ENCODE measurements at regions of chr3 and their contacts with region 1.

Region 1: GRCh38 chr3:185176750-185177359 is 24.0 kb upstream of the C3orf70 start:
- DNase-seq: no peak
- H3K4me3 ChIP-seq: no peak overlapping the region
- CTCF ChIP-seq: peak; percentile 27

Region 2: DNA sequence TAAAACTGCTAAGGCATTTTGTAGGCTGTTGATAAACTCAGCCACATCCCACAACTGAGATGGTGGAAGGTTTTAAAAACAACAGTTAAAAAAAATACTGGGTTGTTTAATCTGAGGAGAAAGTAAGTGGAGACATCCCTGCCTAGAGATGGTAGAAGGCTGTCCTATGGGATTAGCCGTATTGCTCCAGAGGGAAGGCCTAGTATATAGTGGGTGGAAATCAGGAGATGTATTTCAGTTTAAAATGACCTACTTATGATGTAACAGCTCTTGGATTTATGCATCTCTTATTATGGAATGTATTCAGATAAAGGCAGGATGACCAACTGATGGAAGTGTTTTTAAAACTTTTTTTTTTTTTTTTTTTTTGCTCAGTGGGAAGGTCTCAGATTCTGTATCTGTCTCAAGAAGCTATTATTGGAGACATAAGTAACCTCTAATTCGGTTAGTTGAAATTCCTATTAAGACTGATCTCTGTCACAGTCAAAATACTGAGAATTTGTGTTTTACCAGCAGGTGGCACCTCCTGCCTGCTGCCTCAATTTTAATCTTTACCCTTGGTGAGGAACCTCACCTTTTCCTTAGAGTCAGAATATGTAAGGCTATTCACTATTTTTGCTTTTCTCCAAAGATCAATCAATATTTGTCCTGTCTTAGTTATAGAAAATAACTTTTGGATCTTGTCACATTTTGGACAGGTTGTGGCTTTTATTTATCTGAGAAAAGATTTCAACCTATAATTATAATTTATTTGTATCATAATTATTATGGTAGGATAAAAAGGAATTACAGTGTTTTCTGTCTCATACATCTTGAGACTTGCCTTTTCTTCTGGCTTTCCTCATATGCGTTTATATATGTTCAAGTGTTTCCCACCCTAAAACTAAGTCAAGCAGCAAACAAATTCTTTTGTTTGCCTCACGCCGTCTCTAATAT is 301.9 kb before region 1 on chr3:
- CTCF ChIA-PET with region 1: interaction called, 28 read pairs
- POLR2A ChIA-PET with region 1: no interaction called
- DNase-seq: no peak
- H3K4me3 ChIP-seq: no peak overlapping the region
- CTCF ChIP-seq: peak; percentile 30

Region 3: GRCh38 chr3:185084901-185085300 is 92.0 kb before region 1 on chr3:
- CTCF ChIA-PET with region 1: interaction called, 25 read pairs
- POLR2A ChIA-PET with region 1: no interaction called
- DNase-seq: peak; percentile 73
- H3K4me3 ChIP-seq: no peak overlapping the region
- CTCF ChIP-seq: peak; percentile 65

Region 4: DNA sequence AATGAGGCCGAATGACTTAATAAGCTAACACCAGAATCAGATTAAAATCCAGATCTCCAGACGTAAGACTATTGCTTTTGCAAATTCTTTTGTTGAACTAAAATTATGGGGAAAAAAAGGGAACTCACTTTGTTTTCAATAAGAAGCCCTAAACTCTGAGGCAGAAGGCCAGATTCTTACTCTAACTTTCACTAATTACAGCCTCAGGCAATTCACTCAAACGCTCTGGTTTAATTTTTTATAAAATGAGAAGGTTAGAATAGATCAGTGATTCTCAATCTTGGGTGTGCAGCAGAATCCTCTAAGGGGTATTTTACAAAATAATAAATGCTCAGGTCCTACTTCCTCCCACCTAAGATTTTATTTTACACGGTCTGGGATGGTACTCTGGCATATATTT is 62.1 kb before region 1 on chr3:
- CTCF ChIA-PET with region 1: no interaction called
- POLR2A ChIA-PET with region 1: no interaction called
- DNase-seq: no peak
- H3K4me3 ChIP-seq: no peak overlapping the region
- CTCF ChIP-seq: no peak

Region 5: GRCh38 chr3:185152410-185153210 is 24.2 kb before region 1 on chr3 and contains the start of gene C3orf70:
- CTCF ChIA-PET with region 1: interaction called, 14 read pairs
- POLR2A ChIA-PET with region 1: no interaction called
- DNase-seq: no peak
- H3K4me3 ChIP-seq: peak within 1 kb of the TSS; percentile 83
- CTCF ChIP-seq: no peak

Region 6: DNA sequence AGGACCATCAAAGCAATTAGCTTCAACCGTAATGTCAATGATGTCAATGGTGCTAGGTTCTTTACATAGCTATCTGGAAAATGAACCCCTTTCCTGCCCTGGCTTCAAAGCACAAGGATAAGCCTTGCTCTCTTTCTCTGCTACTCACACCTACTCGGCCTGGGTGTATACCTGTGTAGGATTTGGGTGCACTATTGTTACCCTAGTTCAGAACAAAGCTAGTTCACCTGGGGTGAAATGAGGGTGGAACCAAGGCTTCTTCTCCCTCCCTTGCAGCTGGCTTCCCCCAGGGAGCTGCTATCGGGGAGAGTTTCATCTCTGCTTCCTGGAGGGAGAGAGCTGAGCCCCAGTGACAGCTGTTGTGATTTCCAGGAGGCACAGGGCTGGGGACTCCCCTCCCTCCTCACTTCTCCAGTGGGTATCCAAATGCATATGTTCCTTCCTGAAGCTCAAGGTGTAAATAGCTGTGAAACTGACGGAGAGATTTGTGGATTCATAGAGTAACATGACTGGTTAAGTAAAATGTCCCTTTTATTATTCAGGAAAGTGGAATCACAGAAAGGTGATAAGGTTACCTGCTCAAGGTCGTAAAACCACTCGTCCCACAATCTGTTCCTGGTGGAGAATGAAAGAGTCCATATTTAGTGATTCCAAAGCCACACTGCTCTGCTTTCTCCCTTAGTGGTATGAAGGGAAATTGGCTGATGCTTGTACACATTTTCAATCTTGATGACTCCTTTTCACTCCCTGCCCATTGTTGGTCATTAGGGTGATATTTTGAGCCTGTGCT is 12.2 kb before region 1 on chr3:
- CTCF ChIA-PET with region 1: interaction called, 36 read pairs
- POLR2A ChIA-PET with region 1: no interaction called
- DNase-seq: no peak
- H3K4me3 ChIP-seq: no peak overlapping the region
- CTCF ChIP-seq: no peak

Region 7: GRCh38 chr3:185188816-185189215 is 12.0 kb after region 1 on chr3:
- CTCF ChIA-PET with region 1: interaction called, 16 read pairs
- POLR2A ChIA-PET with region 1: no interaction called
- DNase-seq: no peak
- H3K4me3 ChIP-seq: no peak overlapping the region
- CTCF ChIP-seq: no peak

Region 8: GRCh38 chr3:185508335-185508991 is 331.6 kb after region 1 on chr3:
- CTCF ChIA-PET with region 1: no interaction called
- POLR2A ChIA-PET with region 1: no interaction called
- DNase-seq: no peak
- H3K4me3 ChIP-seq: no peak overlapping the region
- CTCF ChIP-seq: no peak

Measured in AG04449 (cell line).